Gastrocnemius medialis (tissue), 4 donors: ENCODE measurements at regions of chr17 and their contacts with region 1.

Region 1: DNA sequence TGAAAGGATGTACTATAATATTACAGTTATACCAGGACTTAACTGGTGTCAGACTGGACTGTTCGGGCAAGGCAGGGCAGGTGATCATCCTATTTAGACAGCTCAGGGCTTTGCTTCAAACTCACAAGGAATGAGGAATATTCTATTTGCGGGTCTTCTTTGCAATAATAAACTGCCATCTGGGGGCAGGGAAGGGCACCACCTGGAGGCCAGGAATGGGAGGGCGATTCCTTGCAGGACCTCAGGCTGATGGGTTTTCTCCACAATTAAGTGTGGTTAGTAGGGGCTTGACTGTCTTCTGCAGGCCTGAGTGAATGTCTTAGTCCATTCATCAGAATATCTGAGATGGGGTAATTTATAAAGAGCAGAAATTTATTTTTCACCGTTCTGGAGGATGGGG is 424.1 kb downstream of the CA10 start:
- DNase-seq: no peak
- ATAC-seq: no peak
- H3K4me3 ChIP-seq: no peak overlapping the region
- H3K27ac ChIP-seq: no peak overlapping the region
- H3K4me1 ChIP-seq: no peaks in the 10 kb centered on the region
- H3K27me3 ChIP-seq: no peaks in the 10 kb centered on the region
- CTCF ChIP-seq: peak in 4 of 5 experiments; percentile 18 to 52 (median 42)
- POLR2A ChIP-seq: no peak

Region 2: DNA sequence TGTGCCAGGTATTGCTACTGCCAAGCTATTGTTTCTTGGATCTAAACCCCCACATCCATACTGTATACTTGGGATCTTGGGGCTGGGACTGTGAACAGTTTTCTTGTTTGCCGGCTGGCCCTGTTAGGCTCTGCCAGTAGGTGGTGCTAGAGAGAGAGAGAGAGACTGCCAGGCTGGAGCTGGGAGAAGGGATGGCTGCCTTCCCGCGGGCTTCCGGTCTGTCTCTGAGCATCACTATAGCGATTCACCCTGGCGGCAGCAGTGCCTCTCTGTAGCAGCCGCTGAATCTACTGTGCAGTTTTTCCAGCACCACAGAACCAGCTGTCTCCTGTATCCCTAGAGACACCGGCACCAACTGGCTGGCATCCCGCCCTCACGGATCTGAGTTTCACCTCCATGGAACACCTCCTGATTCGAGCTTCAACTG is 272.9 kb before region 1 on chr17:
- in situ Hi-C with region 1: loop called in 1 of 4 experiments (anchors 10 kb)
- intact Hi-C with region 1: no loop called
- DNase-seq: peak in 1 of 2 donors; percentile 18
- ATAC-seq: no peak
- H3K4me3 ChIP-seq: no peak overlapping the region
- H3K27ac ChIP-seq: no peak overlapping the region
- H3K4me1 ChIP-seq: no peaks in the 10 kb centered on the region
- H3K27me3 ChIP-seq: no peaks in the 10 kb centered on the region
- CTCF ChIP-seq: peak; percentile 16 to 65 (median 48)
- POLR2A ChIP-seq: no peak

Region 3: DNA sequence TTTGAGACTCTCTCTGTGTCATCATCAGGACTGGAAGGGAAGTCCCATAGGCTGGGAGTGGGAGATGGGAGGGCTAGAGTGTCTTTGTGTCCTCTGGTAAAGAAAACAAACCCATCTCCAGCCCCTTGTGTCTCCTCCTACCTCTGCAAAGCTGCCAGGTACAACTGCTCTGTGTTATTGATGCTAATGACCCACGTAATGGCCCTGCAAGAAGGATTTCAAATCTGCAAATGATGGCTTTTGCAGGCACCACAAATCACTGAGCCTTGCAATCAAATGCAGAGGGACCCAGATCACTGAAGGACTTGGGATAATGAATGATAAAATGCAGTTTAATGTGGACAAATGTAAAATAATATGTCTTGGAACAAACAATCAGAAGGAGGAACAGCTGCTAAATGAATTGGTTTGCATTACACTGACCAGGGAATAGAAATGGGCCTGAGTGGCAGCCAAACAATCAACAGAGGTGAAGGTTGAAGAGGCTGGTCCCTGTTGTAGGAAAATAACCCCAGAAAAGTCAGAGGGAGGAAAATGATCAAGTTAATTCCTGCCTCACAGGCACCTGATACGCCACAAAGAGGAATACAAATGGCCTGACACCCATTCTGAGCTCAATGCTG is 49.1 kb before region 1 on chr17:
- in situ Hi-C with region 1: no loop called
- intact Hi-C with region 1: no loop called
- DNase-seq: no peak
- ATAC-seq: no peak
- H3K4me3 ChIP-seq: no peak overlapping the region
- H3K27ac ChIP-seq: no peak overlapping the region
- H3K4me1 ChIP-seq: peaks cover 0 to 5% of the 10 kb centered on the region in 2 donors
- H3K27me3 ChIP-seq: no peaks in the 10 kb centered on the region
- CTCF ChIP-seq: no peak
- POLR2A ChIP-seq: no peak